ENCODE measurements at regions of chr3 and their contacts with region 1.

Region 1: GRCh38 chr3:59575113-59576001 is 525.5 kb upstream of the CFAP20DC start:
- DNase-seq: peak; percentile 93
- H3K4me3 ChIP-seq: no peak overlapping the region
- H3K27ac ChIP-seq: no peak overlapping the region
- H3K4me1 ChIP-seq: peaks cover 0 to 14% (median 7%) of the 10 kb centered on the region in 4 donors
- H3K27me3 ChIP-seq: no peaks in the 10 kb centered on the region
- CTCF ChIP-seq: peak in 6 of 7 experiments; percentile 19 to 98 (median 95)
- EP300 ChIP-seq: no peak
- POLR2A ChIP-seq: no peak

Region 2: GRCh38 chr3:59862686-59863085 is 287.3 kb after region 1 on chr3:
- intact Hi-C with region 1: loop called (anchors 10 kb)
- DNase-seq: no peak
- H3K4me3 ChIP-seq: no peak overlapping the region
- H3K27ac ChIP-seq: no peak overlapping the region
- H3K4me1 ChIP-seq: no peaks in the 10 kb centered on the region
- H3K27me3 ChIP-seq: no peaks in the 10 kb centered on the region
- CTCF ChIP-seq: no peak
- EP300 ChIP-seq: no peak
- POLR2A ChIP-seq: no peak